Upper lobe of right lung (tissue), 1 donor: ENCODE measurements at regions of chr10 and their contacts with region 1.

Region 1: GRCh38 chr10:68959695-68960524 is 3.9 kb downstream of the DDX21 start:
- DNase-seq: no peak
- ATAC-seq: no peak
- H3K4me3 ChIP-seq: no peak overlapping the region
- H3K27ac ChIP-seq: no peak overlapping the region
- H3K4me1 ChIP-seq: peaks cover 24% of the 10 kb centered on the region
- H3K27me3 ChIP-seq: no peaks in the 10 kb centered on the region
- CTCF ChIP-seq: no peak

Region 2: DNA sequence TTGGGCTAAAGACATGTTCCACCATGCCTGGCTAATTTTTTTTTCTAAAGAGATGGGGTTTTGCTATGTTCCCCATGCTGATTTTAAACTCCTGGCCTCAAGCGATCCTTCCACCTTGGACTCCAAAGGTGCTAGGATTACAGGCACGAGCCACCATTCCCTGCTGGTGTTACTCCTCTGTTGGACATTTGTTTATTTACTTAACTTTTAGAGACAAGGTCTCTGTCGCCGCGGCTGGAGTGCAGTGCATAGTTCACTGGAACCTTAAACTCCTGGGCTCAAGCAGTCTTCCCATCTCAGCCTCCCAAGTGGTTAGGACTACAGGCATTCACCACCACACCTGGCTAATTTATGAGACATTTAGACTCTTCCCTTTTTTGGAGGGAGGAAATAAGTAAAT is 199.9 kb before region 1 on chr10:
- intact Hi-C with region 1: loop called (anchors 10 kb)
- DNase-seq: no peak
- ATAC-seq: no peak
- H3K4me3 ChIP-seq: no peak overlapping the region
- H3K27ac ChIP-seq: no peak overlapping the region
- H3K4me1 ChIP-seq: no peaks in the 10 kb centered on the region
- H3K27me3 ChIP-seq: no peaks in the 10 kb centered on the region
- CTCF ChIP-seq: no peak